OCI-LY7 (cell line): ENCODE measurements at regions of chr13 and their contacts with region 1.

Region 1: GRCh38 chr13:42333613-42334328 is 61.8 kb downstream of the AKAP11 start:
- DNase-seq: peak; percentile 33
- H3K4me3 ChIP-seq: no peak overlapping the region
- H3K27ac ChIP-seq: no peak overlapping the region
- H3K4me1 ChIP-seq: no peaks in the 10 kb centered on the region
- CTCF ChIP-seq: peak; percentile 68

Region 2: GRCh38 chr13:42478531-42479156 is 144.9 kb after region 1 on chr13:
- CTCF ChIA-PET with region 1: no interaction called
- POLR2A ChIA-PET with region 1: no interaction called
- intact Hi-C with region 1: loop called (anchors 10 kb)
- DNase-seq: peak; percentile 4
- H3K4me3 ChIP-seq: no peak overlapping the region
- H3K27ac ChIP-seq: no peak overlapping the region
- H3K4me1 ChIP-seq: no peaks in the 10 kb centered on the region
- CTCF ChIP-seq: peak; percentile 60